ENCODE measurements at regions of chr1 and their contacts with region 1.

Region 1: DNA sequence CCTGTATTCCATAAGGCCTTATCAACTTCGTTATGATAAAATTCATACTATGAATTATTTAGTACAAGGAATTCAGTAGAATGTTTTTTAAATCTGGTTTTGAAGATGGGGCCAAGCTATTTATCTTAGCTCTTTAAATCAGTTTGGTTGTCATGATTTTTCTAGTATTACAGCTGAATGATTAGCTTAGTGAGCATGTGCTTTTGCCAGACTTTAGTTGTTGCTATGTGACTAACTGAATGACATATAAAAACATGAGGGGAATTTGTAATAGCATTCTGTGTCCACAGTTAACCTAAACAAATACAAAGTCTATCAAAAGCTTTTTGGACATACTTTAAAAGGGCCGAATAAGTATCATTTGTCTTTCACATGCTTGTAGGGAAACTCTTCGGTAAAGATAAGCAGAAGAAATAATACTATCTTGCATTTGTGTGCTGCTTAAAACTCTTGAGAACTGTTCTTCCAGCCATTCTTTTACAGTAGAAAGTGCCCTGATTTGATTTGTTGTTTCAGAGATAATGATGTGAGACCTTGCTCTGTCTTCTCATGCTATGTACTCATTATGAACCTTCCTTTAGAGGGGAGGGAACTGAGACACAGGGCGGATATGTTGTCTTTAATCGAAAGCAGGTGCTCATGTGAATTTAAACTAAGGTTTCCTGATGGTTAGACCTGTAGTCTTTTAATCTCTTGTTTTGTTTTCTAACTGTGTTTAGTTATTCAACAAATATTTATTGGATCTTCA is 18.8 kb downstream of the NEK7 start:
- DNase-seq: peak; percentile 36
- ATAC-seq: peak; percentile 54
- H3K4me3 ChIP-seq: no peak overlapping the region
- H3K4me3 Mint-ChIP-seq: peak overlapping the region; percentile 76
- H3K27ac ChIP-seq: peak overlapping the region in 1 of 2 donors; percentile 56
- H3K27ac Mint-ChIP-seq: peak overlapping the region; percentile 81
- H3K4me1 ChIP-seq: peaks cover 30 to 52% of the 10 kb centered on the region in 2 donors
- H3K4me1 Mint-ChIP-seq: peaks cover 76% of the 10 kb centered on the region
- H3K27me3 ChIP-seq: no peaks in the 10 kb centered on the region
- H3K27me3 Mint-ChIP-seq: no peaks in the 10 kb centered on the region
- CTCF ChIP-seq: no peak

Region 2: GRCh38 chr1:198205016-198205684 is 29.6 kb after region 1 on chr1:
- CTCF ChIA-PET with region 1: no interaction called
- POLR2A ChIA-PET with region 1: no interaction called
- intact Hi-C with region 1: loop called (anchors 5 kb)
- DNase-seq: no peak
- ATAC-seq: no peak
- H3K4me3 ChIP-seq: no peak overlapping the region
- H3K4me3 Mint-ChIP-seq: no peak overlapping the region
- H3K27ac ChIP-seq: no peak overlapping the region
- H3K27ac Mint-ChIP-seq: no peak overlapping the region
- H3K4me1 ChIP-seq: peaks cover 0 to 14% of the 10 kb centered on the region in 2 donors
- H3K4me1 Mint-ChIP-seq: peaks cover 50% of the 10 kb centered on the region
- H3K27me3 ChIP-seq: no peaks in the 10 kb centered on the region
- H3K27me3 Mint-ChIP-seq: no peaks in the 10 kb centered on the region
- CTCF ChIP-seq: no peak

Region 3: DNA sequence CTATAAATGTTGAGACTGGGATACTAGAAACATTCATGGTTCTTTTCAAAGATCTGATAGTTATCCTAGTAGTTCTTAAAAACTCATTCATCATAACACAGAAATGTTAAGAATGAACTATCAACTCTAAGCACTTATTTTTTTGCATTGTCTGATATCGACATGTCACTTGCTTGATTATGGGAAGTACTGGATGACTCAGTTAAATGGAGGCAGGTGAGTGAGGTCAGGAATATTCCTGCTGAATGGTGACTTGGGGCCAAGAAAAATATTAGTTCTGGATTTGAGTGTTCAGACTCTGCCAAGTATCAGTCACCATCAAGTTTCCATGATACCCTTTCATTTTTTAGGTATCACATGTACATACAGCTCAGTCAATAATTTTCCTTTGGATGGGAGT is 44.8 kb after region 1 on chr1:
- CTCF ChIA-PET with region 1: no interaction called
- POLR2A ChIA-PET with region 1: no interaction called
- intact Hi-C with region 1: loop called (anchors 5 kb)
- DNase-seq: no peak
- ATAC-seq: no peak
- H3K4me3 ChIP-seq: no peak overlapping the region
- H3K4me3 Mint-ChIP-seq: no peak overlapping the region
- H3K27ac ChIP-seq: no peak overlapping the region
- H3K27ac Mint-ChIP-seq: no peak overlapping the region
- H3K4me1 ChIP-seq: no peaks in the 10 kb centered on the region
- H3K4me1 Mint-ChIP-seq: peaks cover 12% of the 10 kb centered on the region
- H3K27me3 ChIP-seq: no peaks in the 10 kb centered on the region
- H3K27me3 Mint-ChIP-seq: no peaks in the 10 kb centered on the region
- CTCF ChIP-seq: no peak

Region 4: GRCh38 chr1:198291036-198291435 is 115.4 kb after region 1 on chr1:
- CTCF ChIA-PET with region 1: no interaction called
- POLR2A ChIA-PET with region 1: no interaction called
- intact Hi-C with region 1: no loop called
- DNase-seq: no peak
- ATAC-seq: no peak
- H3K4me3 ChIP-seq: no peak overlapping the region
- H3K4me3 Mint-ChIP-seq: no peak overlapping the region
- H3K27ac ChIP-seq: no peak overlapping the region
- H3K27ac Mint-ChIP-seq: no peak overlapping the region
- H3K4me1 ChIP-seq: no peaks in the 10 kb centered on the region
- H3K4me1 Mint-ChIP-seq: no peaks in the 10 kb centered on the region
- H3K27me3 ChIP-seq: no peaks in the 10 kb centered on the region
- H3K27me3 Mint-ChIP-seq: no peaks in the 10 kb centered on the region
- CTCF ChIP-seq: no peak

Region 5: GRCh38 chr1:198399452-198399851 is 223.9 kb after region 1 on chr1:
- CTCF ChIA-PET with region 1: no interaction called
- POLR2A ChIA-PET with region 1: no interaction called
- intact Hi-C with region 1: no loop called
- DNase-seq: no peak
- ATAC-seq: no peak
- H3K4me3 ChIP-seq: no peak overlapping the region
- H3K4me3 Mint-ChIP-seq: no peak overlapping the region
- H3K27ac ChIP-seq: no peak overlapping the region
- H3K27ac Mint-ChIP-seq: no peak overlapping the region
- H3K4me1 ChIP-seq: no peaks in the 10 kb centered on the region
- H3K4me1 Mint-ChIP-seq: no peaks in the 10 kb centered on the region
- H3K27me3 ChIP-seq: peaks cover 0 to 10% (median 3%) of the 10 kb centered on the region in 4 experiments
- H3K27me3 Mint-ChIP-seq: peaks cover 27% of the 10 kb centered on the region
- CTCF ChIP-seq: no peak

Measured in B cell (primary cell).